Heart left ventricle (tissue), 16 donors: ENCODE measurements at regions of chr14 and their contacts with region 1.

Region 1: GRCh38 chr14:37594238-37594914 is 673 bp downstream of the FOXA1 start:
- DNase-seq: no peak
- ATAC-seq: peak in 1 of 4 donors; percentile 54
- H3K4me3 ChIP-seq: peak overlapping the region in 11 of 12 donors; percentile 12 to 46 (median 30)
- H3K27ac ChIP-seq: no peak overlapping the region
- H3K4me1 ChIP-seq: peaks cover 0 to 59% (median 20%) of the 10 kb centered on the region in 12 donors
- H3K27me3 ChIP-seq: peaks cover 75 to 98% (median 95%) of the 10 kb centered on the region in 9 donors
- CTCF ChIP-seq: peak; percentile 23 to 63 (median 50)
- POLR2A ChIP-seq: no peak

Region 2: GRCh38 chr14:36661756-36662498 is 932.4 kb before region 1 on chr14 and contains the start of gene PAX9:
- intact Hi-C with region 1: loop called in 2 of 10 experiments (anchors 10 kb)
- DNase-seq: peak; percentile 46 to 67 (median 60)
- ATAC-seq: peak; percentile 87 to 91 (median 90)
- H3K4me3 ChIP-seq: peak within 1 kb of the TSS in 10 of 12 donors; percentile 7 to 38 (median 24)
- H3K27ac ChIP-seq: no peak within 1 kb of the TSS
- H3K4me1 ChIP-seq: peaks cover 0 to 68% (median 39%) of the 10 kb centered on the region in 12 donors
- H3K27me3 ChIP-seq: peaks cover 87 to 100% (median 99%) of the 10 kb centered on the region in 9 donors
- CTCF ChIP-seq: no peak
- POLR2A ChIP-seq: no peak
- total RNA-seq, gene PAX9: not detected

Region 3: GRCh38 chr14:37246427-37246914 is 347.9 kb before region 1 on chr14:
- intact Hi-C with region 1: loop called in 3 of 10 experiments (anchors 10 kb)
- DNase-seq: no peak
- ATAC-seq: no peak
- H3K4me3 ChIP-seq: no peak overlapping the region
- H3K27ac ChIP-seq: no peak overlapping the region
- H3K4me1 ChIP-seq: no peaks in the 10 kb centered on the region
- H3K27me3 ChIP-seq: no peaks in the 10 kb centered on the region
- CTCF ChIP-seq: peak; percentile 61 to 86 (median 75)
- POLR2A ChIP-seq: no peak